Activated T-helper 2 cell treated with anti-CD3 and anti-CD28 coated beads, Interferon-gamma antibody, Interleukin-2, Interleukin-4, amounts not matched to agents 10 μg/mL and 5 μg/mL and 100 μg/mL, durations not matched to agents 14 hours and 24 hours and 36 hours (primary cell): ENCODE measurements at regions of chr1 and their contacts with region 1.

Region 1: GRCh38 chr1:43529206-43529731 is 1.4 kb upstream of the PTPRF start:
- DNase-seq: peak; percentile 66
- H3K4me3 Mint-ChIP-seq: peak overlapping the region; percentile 14
- H3K27ac Mint-ChIP-seq: no peak overlapping the region
- H3K4me1 Mint-ChIP-seq: peaks cover 15% of the 10 kb centered on the region
- H3K27me3 Mint-ChIP-seq: peaks cover 52% of the 10 kb centered on the region

Region 2: DNA sequence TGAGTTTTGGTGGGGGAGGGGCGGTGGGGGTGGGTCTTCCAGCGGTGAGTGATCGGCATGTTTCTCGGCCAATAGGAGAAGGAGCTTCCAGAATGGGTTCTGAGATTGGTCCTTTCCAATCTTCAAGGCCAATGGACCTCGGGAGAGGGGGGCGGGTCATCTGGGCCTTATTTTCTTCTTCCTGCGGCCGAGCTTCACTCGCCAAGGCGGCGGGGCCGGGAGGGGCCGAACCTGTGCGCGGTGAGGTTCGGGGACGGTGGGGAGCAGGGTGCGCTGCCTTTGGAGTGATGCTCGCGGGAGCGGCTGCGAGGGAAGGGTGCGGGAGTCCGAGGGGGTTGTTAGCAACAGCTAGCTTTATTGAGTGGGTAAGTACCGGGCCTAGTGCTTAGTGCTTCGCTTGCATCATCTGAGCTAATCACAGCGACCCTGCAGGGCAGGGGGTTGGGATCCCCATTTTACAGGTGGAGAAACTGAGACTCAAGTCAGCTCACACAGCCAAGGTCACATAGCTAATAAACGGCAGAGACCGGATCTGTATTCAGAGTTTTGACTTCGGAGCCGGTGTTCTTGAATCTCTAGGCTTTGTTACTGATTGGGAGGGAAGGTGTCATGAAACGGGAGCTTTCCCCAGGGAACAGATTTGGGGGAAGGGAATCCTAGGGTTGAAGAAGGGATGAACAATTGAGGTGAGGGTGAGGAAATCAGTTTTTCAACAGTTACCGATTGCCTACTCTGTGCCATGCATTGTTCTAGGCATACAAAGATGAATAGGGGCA is 121.2 kb after region 1 on chr1:
- intact Hi-C with region 1: loop called (anchors 2 kb)
- DNase-seq: peak; percentile 89
- H3K4me3 Mint-ChIP-seq: peak overlapping the region; percentile 90
- H3K27ac Mint-ChIP-seq: peak overlapping the region; percentile 97
- H3K4me1 Mint-ChIP-seq: peaks cover 29% of the 10 kb centered on the region
- H3K27me3 Mint-ChIP-seq: peaks cover 1% of the 10 kb centered on the region

Region 3: DNA sequence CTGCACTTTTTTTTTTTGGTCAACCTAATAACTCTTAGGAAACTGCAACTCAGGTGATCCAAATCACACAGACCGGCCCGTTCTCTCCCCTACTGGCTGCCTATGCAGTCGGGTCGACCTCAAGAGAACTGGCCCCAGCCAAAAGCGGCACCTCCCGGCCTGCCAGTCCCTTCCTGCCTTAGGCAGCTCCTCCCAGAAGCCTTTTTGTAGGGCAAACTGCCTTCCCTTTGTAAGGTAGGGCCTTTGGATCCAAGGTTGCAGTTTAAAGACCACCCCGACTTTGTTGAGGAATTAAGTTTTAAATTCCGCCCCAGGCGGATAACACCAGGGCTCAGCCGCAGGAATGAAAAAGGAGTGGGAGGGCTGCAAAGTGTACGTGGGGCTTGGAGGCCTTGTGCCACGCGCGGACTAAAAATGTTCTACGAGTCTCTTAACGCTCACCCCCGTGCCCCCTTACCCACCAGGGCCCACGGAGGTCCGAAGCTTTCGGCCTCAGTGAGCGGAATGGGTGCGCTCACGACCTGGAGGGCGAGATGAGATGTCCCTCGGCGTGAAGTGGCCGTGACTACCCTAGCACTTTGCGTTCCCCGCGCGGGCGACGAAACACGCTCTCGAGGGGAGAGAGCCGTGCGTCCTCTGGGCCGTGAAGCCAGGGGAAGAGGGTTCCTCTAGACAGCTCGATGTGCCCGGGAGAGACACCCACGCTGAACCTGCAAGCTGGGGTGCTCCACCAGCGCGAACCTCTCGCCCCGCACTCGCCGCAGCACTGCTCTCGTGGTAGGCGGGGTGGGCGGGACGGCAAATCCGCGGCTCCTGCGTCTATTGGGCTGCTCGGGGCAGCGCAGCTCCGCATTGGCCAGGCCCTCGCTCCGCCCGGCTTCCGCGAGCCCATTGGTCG is 177.6 kb after region 1 on chr1:
- intact Hi-C with region 1: loop called (anchors 5 kb)
- DNase-seq: peak; percentile 90
- H3K4me3 Mint-ChIP-seq: peak overlapping the region; percentile 85
- H3K27ac Mint-ChIP-seq: peak overlapping the region; percentile 75
- H3K4me1 Mint-ChIP-seq: peaks cover 44% of the 10 kb centered on the region
- H3K27me3 Mint-ChIP-seq: no peaks in the 10 kb centered on the region

Region 4: DNA sequence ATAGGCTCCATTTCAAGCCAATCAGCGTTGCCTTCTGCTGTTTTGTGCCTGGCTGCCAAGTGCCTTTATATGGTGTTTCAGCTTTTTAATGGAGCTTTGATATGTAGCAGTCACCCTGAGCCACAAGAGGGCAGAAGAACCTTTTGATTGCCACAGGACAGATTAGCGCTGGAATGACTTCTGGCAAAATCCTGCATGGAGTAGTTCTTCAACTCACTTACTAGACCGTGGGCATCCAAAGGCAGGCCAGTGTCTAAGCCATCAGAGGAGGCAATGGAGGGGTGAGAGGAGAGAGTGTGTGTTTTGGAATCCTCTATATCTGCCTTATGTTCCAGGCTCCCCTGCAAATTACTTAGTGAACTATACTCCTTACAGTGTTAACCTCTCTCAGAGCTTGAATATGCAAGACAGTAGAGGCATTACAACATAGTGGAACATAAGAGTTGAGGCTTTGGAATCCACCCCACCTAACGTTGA is 234.3 kb after region 1 on chr1:
- intact Hi-C with region 1: loop called (anchors 1 kb)
- DNase-seq: peak; percentile 24
- H3K4me3 Mint-ChIP-seq: no peak overlapping the region
- H3K27ac Mint-ChIP-seq: no peak overlapping the region
- H3K4me1 Mint-ChIP-seq: peaks cover 1% of the 10 kb centered on the region
- H3K27me3 Mint-ChIP-seq: no peaks in the 10 kb centered on the region

Region 5: GRCh38 chr1:43934101-43934985 is 405.1 kb after region 1 on chr1:
- intact Hi-C with region 1: loop called (anchors 5 kb)
- DNase-seq: peak; percentile 33
- H3K4me3 Mint-ChIP-seq: no peak overlapping the region
- H3K27ac Mint-ChIP-seq: no peak overlapping the region
- H3K4me1 Mint-ChIP-seq: peaks cover 11% of the 10 kb centered on the region
- H3K27me3 Mint-ChIP-seq: peaks cover 10% of the 10 kb centered on the region

Region 6: GRCh38 chr1:44036409-44037139 is 507.3 kb after region 1 on chr1:
- intact Hi-C with region 1: loop called (anchors 5 kb)
- DNase-seq: peak; percentile 36
- H3K4me3 Mint-ChIP-seq: no peak overlapping the region
- H3K27ac Mint-ChIP-seq: no peak overlapping the region
- H3K4me1 Mint-ChIP-seq: peaks cover 11% of the 10 kb centered on the region
- H3K27me3 Mint-ChIP-seq: peaks cover 7% of the 10 kb centered on the region